Transverse colon (tissue), 4 donors: ENCODE measurements at regions of chr7 and their contacts with region 1.

Region 1: GRCh38 chr7:157851501-157852067 is 514.8 kb downstream of the DNAJB6 start:
- DNase-seq: peak; percentile 49
- H3K4me3 ChIP-seq: peak overlapping the region in 2 of 4 donors; percentile 7 to 20
- H3K27ac ChIP-seq: peak overlapping the region in 1 of 4 donors; percentile 43
- H3K4me1 ChIP-seq: peaks cover 0 to 8% (median 4%) of the 10 kb centered on the region in 4 donors
- H3K27me3 ChIP-seq: no peaks in the 10 kb centered on the region
- CTCF ChIP-seq: no peak
- EP300 ChIP-seq: no peak
- POLR2A ChIP-seq: no peak

Region 2: GRCh38 chr7:157432957-157433576 is 418.5 kb before region 1 on chr7:
- in situ Hi-C with region 1: loop called in 1 of 4 experiments (anchors 25 kb)
- intact Hi-C with region 1: no loop called
- DNase-seq: peak; percentile 35
- H3K4me3 ChIP-seq: peak overlapping the region in 1 of 4 donors; percentile 32
- H3K27ac ChIP-seq: no peak overlapping the region
- H3K4me1 ChIP-seq: peaks cover 0 to 9% (median 7%) of the 10 kb centered on the region in 4 donors
- H3K27me3 ChIP-seq: no peaks in the 10 kb centered on the region
- CTCF ChIP-seq: peak; percentile 55 to 74 (median 72)
- EP300 ChIP-seq: no peak
- POLR2A ChIP-seq: no peak

Region 3: GRCh38 chr7:157949711-157950110 is 98.1 kb after region 1 on chr7:
- in situ Hi-C with region 1: no loop called
- intact Hi-C with region 1: no loop called
- DNase-seq: no peak
- H3K4me3 ChIP-seq: no peak overlapping the region
- H3K27ac ChIP-seq: no peak overlapping the region
- H3K4me1 ChIP-seq: no peaks in the 10 kb centered on the region
- H3K27me3 ChIP-seq: no peaks in the 10 kb centered on the region
- CTCF ChIP-seq: no peak
- EP300 ChIP-seq: no peak
- POLR2A ChIP-seq: no peak

Region 4: DNA sequence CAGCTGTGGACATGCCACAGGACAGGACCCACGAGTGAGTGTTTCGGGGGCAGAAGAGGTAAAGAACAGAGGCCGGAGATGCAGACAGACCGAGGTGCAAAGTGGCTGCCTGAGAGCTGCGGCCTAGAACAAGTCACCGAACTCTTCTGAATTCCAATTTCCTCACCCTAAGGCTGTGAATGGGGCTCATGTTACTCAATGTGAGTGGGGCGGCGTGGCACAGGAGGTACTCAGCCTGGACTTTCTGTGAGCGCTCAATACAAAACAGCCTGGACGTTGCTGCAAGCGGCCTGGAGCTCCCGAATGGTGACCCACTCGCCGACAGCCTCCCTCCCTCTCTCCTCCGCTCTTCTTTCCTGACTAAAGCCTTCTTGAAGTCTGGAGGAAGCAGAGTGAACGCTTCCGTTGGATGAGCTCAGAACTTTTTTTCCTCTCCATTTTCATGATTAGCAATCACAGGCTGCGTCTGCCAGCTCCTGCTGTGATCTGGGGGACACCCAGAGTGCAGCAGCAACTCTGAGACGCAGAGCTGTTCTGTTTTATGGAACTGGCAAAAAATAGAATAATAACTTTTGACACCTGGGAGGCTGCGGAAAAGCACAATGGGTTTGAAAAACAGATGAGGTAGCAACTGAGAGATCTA is 627.6 kb after region 1 on chr7:
- in situ Hi-C with region 1: no loop called
- intact Hi-C with region 1: no loop called
- DNase-seq: no peak
- H3K4me3 ChIP-seq: no peak overlapping the region
- H3K27ac ChIP-seq: no peak overlapping the region
- H3K4me1 ChIP-seq: no peaks in the 10 kb centered on the region
- H3K27me3 ChIP-seq: no peaks in the 10 kb centered on the region
- CTCF ChIP-seq: no peak
- EP300 ChIP-seq: no peak
- POLR2A ChIP-seq: no peak